PC-3 (cell line): ENCODE measurements at regions of chr5 and their contacts with region 1.

Region 1: GRCh38 chr5:57499262-57500050 is 16.8 kb upstream of the ACTBL2 start:
- DNase-seq: peak; percentile 71
- ATAC-seq: peak; percentile 41; the same call in 1 of the 2 replicates
- H3K4me3 ChIP-seq: peak overlapping the region; percentile 19; the same call in 1 of the 2 replicates
- H3K27ac ChIP-seq: no peak overlapping the region
- H3K4me1 ChIP-seq: peaks cover 35% of the 10 kb centered on the region
- H3K27me3 ChIP-seq: no peaks in the 10 kb centered on the region
- CTCF ChIP-seq: peak; percentile 77

Region 2: GRCh38 chr5:57613726-57614125 is 114.3 kb after region 1 on chr5:
- CTCF ChIA-PET with region 1: no interaction called
- POLR2A ChIA-PET with region 1: no interaction called
- intact Hi-C with region 1: no loop called
- DNase-seq: no peak
- ATAC-seq: no peak
- H3K4me3 ChIP-seq: no peak overlapping the region
- H3K27ac ChIP-seq: no peak overlapping the region
- H3K4me1 ChIP-seq: no peaks in the 10 kb centered on the region
- H3K27me3 ChIP-seq: no peaks in the 10 kb centered on the region
- CTCF ChIP-seq: no peak

Region 3: GRCh38 chr5:57650360-57651069 is 151.1 kb after region 1 on chr5:
- CTCF ChIA-PET with region 1: interaction called, 8 read pairs
- POLR2A ChIA-PET with region 1: no interaction called
- intact Hi-C with region 1: loop called (anchors 5 kb)
- DNase-seq: peak; percentile 64
- ATAC-seq: peak; percentile 86
- H3K4me3 ChIP-seq: no peak overlapping the region
- H3K27ac ChIP-seq: no peak overlapping the region
- H3K4me1 ChIP-seq: no peaks in the 10 kb centered on the region
- H3K27me3 ChIP-seq: no peaks in the 10 kb centered on the region
- CTCF ChIP-seq: peak; percentile 71